Ovary (tissue), 10 donors: ENCODE measurements at regions of chr21 and their contacts with region 1.

Region 1: GRCh38 chr21:32770871-32771523 is 558 bp downstream of the PAXBP1 start:
- DNase-seq: peak; percentile 55 to 75 (median 63)
- H3K4me3 ChIP-seq: peak overlapping the region; percentile 70
- H3K27ac ChIP-seq: peak overlapping the region; percentile 85 to 90
- H3K4me1 ChIP-seq: peaks cover 5% of the 10 kb centered on the region
- H3K27me3 ChIP-seq: no peaks in the 10 kb centered on the region
- CTCF ChIP-seq: no peak
- EP300 ChIP-seq: no peak
- POLR2A ChIP-seq: no peak

Region 2: DNA sequence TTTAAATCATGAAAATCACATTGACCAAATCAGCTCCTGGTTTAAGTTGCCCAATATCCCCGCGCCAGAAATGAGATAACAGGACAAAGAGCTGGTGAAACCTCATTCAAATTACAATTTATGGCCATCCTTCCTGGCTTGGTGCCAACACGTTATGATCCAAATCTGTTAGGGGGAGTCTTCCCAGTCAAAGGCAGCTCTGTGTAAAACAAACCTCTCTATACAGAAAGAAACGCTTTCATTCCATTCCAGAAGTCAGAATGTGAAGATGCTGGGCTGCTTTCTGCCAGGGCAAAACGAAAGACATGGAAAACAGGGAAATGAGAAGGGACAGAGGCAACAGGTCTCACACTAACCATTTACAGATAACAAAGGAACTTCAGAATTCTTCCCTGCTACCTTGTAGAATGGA is 1373.5 kb before region 1 on chr21:
- intact Hi-C with region 1: no loop called
- DNase-seq: no peak
- H3K4me3 ChIP-seq: no peak overlapping the region
- H3K27ac ChIP-seq: no peak overlapping the region
- H3K4me1 ChIP-seq: no peaks in the 10 kb centered on the region
- H3K27me3 ChIP-seq: no peaks in the 10 kb centered on the region
- CTCF ChIP-seq: no peak
- EP300 ChIP-seq: no peak
- POLR2A ChIP-seq: no peak

Region 3: GRCh38 chr21:32412162-32413014 is 358.6 kb before region 1 on chr21 and contains the start of gene EVA1C:
- intact Hi-C with region 1: loop called in 1 of 4 experiments (anchors 5 kb)
- DNase-seq: peak; percentile 71 to 86 (median 79)
- H3K4me3 ChIP-seq: peak within 1 kb of the TSS; percentile 59
- H3K27ac ChIP-seq: peak within 1 kb of the TSS; percentile 96 to 99
- H3K4me1 ChIP-seq: peaks cover 9% of the 10 kb centered on the region
- H3K27me3 ChIP-seq: no peaks in the 10 kb centered on the region
- CTCF ChIP-seq: peak in 1 of 3 donors; percentile 75
- EP300 ChIP-seq: no peak
- POLR2A ChIP-seq: peak; percentile 28
- total RNA-seq, gene EVA1C: 27.1 to 156 (median 49.6) TPM

Region 4: GRCh38 chr21:32727687-32728455 is 43.1 kb before region 1 on chr21 and contains the start of gene SYNJ1:
- intact Hi-C with region 1: loop called in 1 of 4 experiments (anchors 5 kb)
- DNase-seq: peak; percentile 93 to 97 (median 95)
- H3K4me3 ChIP-seq: peak within 1 kb of the TSS; percentile 99
- H3K27ac ChIP-seq: peak within 1 kb of the TSS; percentile 14 to 79
- H3K4me1 ChIP-seq: peaks cover 8% of the 10 kb centered on the region
- H3K27me3 ChIP-seq: no peaks in the 10 kb centered on the region
- CTCF ChIP-seq: no peak
- EP300 ChIP-seq: no peak
- POLR2A ChIP-seq: peak; percentile 66
- total RNA-seq, gene SYNJ1: 7.0 to 15.6 (median 11.1) TPM

Region 5: DNA sequence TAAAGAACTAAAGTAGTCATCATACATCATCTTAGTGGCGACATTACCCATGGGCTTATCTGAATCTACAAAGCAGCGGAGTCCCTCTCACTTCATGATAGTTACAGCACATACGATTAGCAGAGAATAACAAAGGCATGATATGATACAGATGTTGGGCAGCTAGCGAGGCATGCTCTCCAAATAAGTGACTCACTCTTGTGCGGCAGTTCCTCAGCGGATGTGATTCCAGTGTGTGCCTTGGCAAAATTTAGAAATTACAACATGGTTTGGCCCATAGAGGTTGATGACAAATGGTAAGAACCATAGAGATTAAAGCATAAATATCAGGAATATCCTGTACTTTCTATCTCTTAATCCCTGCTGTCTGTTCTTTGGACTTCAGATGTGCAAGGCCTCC is 48.7 kb after region 1 on chr21:
- intact Hi-C with region 1: loop called in 2 of 4 experiments (anchors 5 to 10 kb)
- DNase-seq: peak; percentile 32 to 73 (median 54)
- H3K4me3 ChIP-seq: no peak overlapping the region
- H3K27ac ChIP-seq: peak overlapping the region in 1 of 2 donors; percentile 43
- H3K4me1 ChIP-seq: peaks cover 14% of the 10 kb centered on the region
- H3K27me3 ChIP-seq: no peaks in the 10 kb centered on the region
- CTCF ChIP-seq: no peak
- EP300 ChIP-seq: no peak
- POLR2A ChIP-seq: no peak

Region 6: GRCh38 chr21:32826329-32827167 is 55.6 kb after region 1 on chr21:
- intact Hi-C with region 1: loop called in 2 of 4 experiments (anchors 5 to 10 kb)
- DNase-seq: peak in 4 of 5 donors; percentile 24 to 68 (median 40)
- H3K4me3 ChIP-seq: no peak overlapping the region
- H3K27ac ChIP-seq: no peak overlapping the region
- H3K4me1 ChIP-seq: no peaks in the 10 kb centered on the region
- H3K27me3 ChIP-seq: no peaks in the 10 kb centered on the region
- CTCF ChIP-seq: peak; percentile 37 to 57 (median 51)
- EP300 ChIP-seq: no peak
- POLR2A ChIP-seq: no peak

Region 7: GRCh38 chr21:32966120-32966519 is 195.1 kb after region 1 on chr21:
- intact Hi-C with region 1: no loop called
- DNase-seq: no peak
- H3K4me3 ChIP-seq: no peak overlapping the region
- H3K27ac ChIP-seq: no peak overlapping the region
- H3K4me1 ChIP-seq: no peaks in the 10 kb centered on the region
- H3K27me3 ChIP-seq: no peaks in the 10 kb centered on the region
- CTCF ChIP-seq: no peak
- EP300 ChIP-seq: no peak
- POLR2A ChIP-seq: no peak